PC-3 (cell line): ENCODE measurements at regions of chr15 and their contacts with region 1.

Region 1: DNA sequence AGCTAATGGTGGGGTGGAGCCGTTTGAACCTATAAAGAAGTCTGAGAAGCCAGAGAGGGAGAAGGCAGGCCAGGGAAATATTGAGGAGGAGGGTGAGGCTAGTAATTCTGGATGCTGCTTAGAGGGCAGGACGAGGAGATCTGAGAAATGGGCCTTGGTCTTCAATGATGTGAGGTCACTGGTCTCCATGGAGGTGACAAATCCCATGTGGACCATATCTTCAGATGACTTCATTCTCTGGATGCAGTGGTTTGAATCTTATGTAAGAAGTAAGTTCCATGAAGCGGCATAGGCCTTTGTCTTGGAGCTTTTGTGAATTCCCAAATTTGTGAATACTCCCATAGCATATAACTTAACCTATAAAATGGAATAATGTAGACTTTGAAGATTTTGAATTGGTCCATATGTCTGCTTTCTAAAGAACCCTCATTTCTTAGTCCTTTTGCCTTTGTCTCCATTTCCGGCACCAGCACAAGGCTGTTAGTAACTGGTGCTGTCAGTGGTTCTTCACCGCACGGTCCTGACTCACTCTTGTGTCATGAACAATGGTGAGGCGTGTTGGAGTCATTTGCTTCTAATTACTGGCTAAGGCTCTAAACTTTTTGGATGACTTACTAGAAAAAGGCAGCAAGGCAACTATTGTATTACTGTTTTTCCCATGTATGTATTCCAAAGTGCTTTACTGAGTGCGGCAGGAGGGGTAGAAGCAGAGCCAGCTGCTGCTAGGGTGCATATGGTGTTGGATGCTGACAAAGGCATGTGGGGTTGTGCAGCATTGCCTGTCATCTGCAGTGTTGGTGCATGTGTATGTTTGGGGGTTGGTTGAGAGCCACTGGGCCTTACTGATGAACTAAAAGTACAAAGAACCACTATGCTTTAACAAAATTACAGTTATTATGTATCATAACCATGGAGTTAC is 279.3 kb upstream of the C2CD4B start:
- DNase-seq: peak; percentile 85
- ATAC-seq: peak; percentile 85
- H3K4me3 ChIP-seq: no peak overlapping the region; the same call in 1 of the 2 replicates
- H3K27ac ChIP-seq: peak overlapping the region; percentile 93
- H3K4me1 ChIP-seq: peaks cover 21% of the 10 kb centered on the region
- H3K27me3 ChIP-seq: no peaks in the 10 kb centered on the region
- CTCF ChIP-seq: no peak

Region 2: GRCh38 chr15:62524848-62525247 is 80.5 kb after region 1 on chr15:
- CTCF ChIA-PET with region 1: no interaction called
- POLR2A ChIA-PET with region 1: no interaction called
- intact Hi-C with region 1: no loop called
- DNase-seq: peak; percentile 50
- ATAC-seq: no peak
- H3K4me3 ChIP-seq: no peak overlapping the region
- H3K27ac ChIP-seq: no peak overlapping the region
- H3K4me1 ChIP-seq: 0 out of 2 replicates have a peak, but pooled peaks cover 8% of the 10 kb centered on the region
- H3K27me3 ChIP-seq: no peaks in the 10 kb centered on the region
- CTCF ChIP-seq: no peak

Region 3: GRCh38 chr15:62758126-62758951 is 314.0 kb after region 1 on chr15:
- CTCF ChIA-PET with region 1: no interaction called
- POLR2A ChIA-PET with region 1: no interaction called
- intact Hi-C with region 1: loop called (anchors 10 kb)
- DNase-seq: peak; percentile 67
- ATAC-seq: peak; percentile 77
- H3K4me3 ChIP-seq: peak overlapping the region; percentile 12; the same call in 1 of the 2 replicates
- H3K27ac ChIP-seq: peak overlapping the region; percentile 46
- H3K4me1 ChIP-seq: peaks cover 41% of the 10 kb centered on the region
- H3K27me3 ChIP-seq: no peaks in the 10 kb centered on the region
- CTCF ChIP-seq: no peak